T-cell (primary cell): ENCODE measurements at regions of chr3 and their contacts with region 1.

Region 1: DNA sequence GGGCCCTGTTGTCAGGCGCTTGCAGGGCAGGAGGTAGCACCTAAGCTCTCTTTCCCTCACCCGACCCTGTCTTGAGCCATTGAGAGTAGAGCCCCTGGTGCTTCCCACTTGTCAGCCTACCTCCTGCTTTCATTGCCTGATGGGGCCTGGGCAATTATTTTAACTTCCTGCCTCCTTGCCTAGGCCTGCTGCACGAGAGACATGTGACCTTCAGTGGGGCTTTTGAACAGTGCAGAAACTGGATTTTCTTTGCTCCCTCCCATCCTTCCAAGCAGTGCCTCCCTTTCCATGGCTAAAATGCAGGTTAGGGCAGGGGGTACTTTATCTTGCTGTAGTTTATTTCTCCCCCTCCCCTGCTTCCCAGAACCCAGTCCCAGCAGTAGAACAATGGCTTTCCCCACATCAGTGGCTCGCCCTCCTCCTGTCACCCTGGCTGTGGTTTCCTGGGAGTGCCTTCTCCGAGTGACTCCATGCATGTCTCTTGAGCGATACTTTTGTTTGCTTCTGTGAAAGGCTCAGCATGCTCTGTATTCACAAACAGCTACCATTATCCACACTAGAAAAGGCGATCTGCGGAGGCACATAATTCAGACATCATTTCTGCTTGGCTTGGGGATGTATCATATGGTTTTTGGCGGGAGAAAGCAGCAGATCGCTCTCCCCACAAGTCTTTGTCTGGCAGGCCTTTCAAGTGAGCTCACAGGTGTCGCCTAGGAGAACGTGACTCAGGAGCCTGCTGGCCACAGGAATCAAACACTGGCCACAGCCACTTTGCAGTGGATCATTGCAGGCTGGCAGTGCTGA is 24.1 kb downstream of the PDIA5 start:
- DNase-seq: no peak
- ATAC-seq: peak; percentile 34 to 57 (median 50)
- H3K4me3 ChIP-seq: peak overlapping the region in 1 of 2 donors; percentile 25
- H3K4me3 Mint-ChIP-seq: peak overlapping the region in 1 of 3 donors; percentile 54
- H3K27ac ChIP-seq: no peak overlapping the region
- H3K27ac Mint-ChIP-seq: peak overlapping the region; percentile 1 to 50
- H3K4me1 ChIP-seq: peaks cover 9 to 17% of the 10 kb centered on the region in 2 experiments
- H3K4me1 Mint-ChIP-seq: peaks cover 17 to 30% (median 19%) of the 10 kb centered on the region in 3 donors
- H3K27me3 ChIP-seq: no peaks in the 10 kb centered on the region
- H3K27me3 Mint-ChIP-seq: no peaks in the 10 kb centered on the region

Region 2: GRCh38 chr3:123015557-123015956 is 75.4 kb before region 1 on chr3:
- CTCF ChIA-PET with region 1: interaction called in 1 of 2 experiments, 14 read pairs
- POLR2A ChIA-PET with region 1: no interaction called
- DNase-seq: peak in 1 of 35 experiments; percentile 4
- ATAC-seq: no peak
- H3K4me3 ChIP-seq: no peak overlapping the region
- H3K4me3 Mint-ChIP-seq: no peak overlapping the region
- H3K27ac ChIP-seq: no peak overlapping the region
- H3K27ac Mint-ChIP-seq: no peak overlapping the region
- H3K4me1 ChIP-seq: no peaks in the 10 kb centered on the region
- H3K4me1 Mint-ChIP-seq: no peaks in the 10 kb centered on the region
- H3K27me3 ChIP-seq: peaks cover 2 to 47% of the 10 kb centered on the region in 2 experiments
- H3K27me3 Mint-ChIP-seq: peaks cover 11 to 27% of the 10 kb centered on the region in 2 donors